ENCODE measurements at regions of chr1 and their contacts with region 1.

Region 1: DNA sequence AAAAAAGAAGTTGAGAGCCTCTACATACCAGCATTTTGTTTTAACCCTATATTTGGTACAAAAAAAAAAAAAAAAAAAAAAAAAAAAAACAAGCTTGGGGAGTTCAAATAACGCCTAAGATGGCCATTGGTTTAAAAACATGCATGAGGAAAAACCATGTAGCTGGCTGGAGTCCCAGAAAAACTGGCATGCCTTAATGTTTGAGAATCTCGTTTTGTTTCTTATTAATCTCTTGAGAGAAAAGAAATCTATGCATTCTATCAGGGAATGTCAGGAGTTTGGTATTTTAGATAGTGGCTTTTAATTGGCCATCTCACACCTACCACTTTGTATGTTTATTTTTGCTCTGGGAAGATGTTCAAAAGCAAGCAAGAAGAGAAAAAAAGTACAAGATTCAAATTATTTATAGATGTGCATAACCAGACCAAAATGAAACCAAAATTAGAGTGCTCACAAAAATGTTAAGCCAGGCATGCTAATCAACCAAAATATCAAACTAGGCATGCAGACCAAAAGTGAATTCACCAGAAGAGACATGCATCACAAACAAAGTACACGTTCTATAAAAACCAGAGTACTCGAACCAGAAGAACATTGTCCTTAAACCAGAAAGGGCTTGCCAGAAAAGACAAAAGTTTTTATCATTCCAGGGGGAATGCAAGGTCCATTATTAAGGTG is 156.6 kb downstream of the AK5 start:
- DNase-seq: no peak
- H3K4me3 Mint-ChIP-seq: peak overlapping the region; percentile 70
- H3K27ac Mint-ChIP-seq: peak overlapping the region; percentile 81
- H3K4me1 Mint-ChIP-seq: peaks cover 28% of the 10 kb centered on the region
- H3K27me3 Mint-ChIP-seq: no peaks in the 10 kb centered on the region

Region 2: GRCh38 chr1:76933872-76934815 is 504.2 kb before region 1 on chr1:
- CTCF ChIA-PET with region 1: no interaction called
- intact Hi-C with region 1: no loop called
- DNase-seq: no peak
- H3K4me3 Mint-ChIP-seq: no peak overlapping the region
- H3K27ac Mint-ChIP-seq: no peak overlapping the region
- H3K4me1 Mint-ChIP-seq: no peaks in the 10 kb centered on the region
- H3K27me3 Mint-ChIP-seq: peaks cover 5% of the 10 kb centered on the region

Region 3: GRCh38 chr1:77170687-77171086 is 267.7 kb before region 1 on chr1:
- CTCF ChIA-PET with region 1: no interaction called
- intact Hi-C with region 1: loop called (anchors 5 kb)
- DNase-seq: no peak
- H3K4me3 Mint-ChIP-seq: no peak overlapping the region
- H3K27ac Mint-ChIP-seq: peak overlapping the region; percentile 62
- H3K4me1 Mint-ChIP-seq: peaks cover 23% of the 10 kb centered on the region
- H3K27me3 Mint-ChIP-seq: no peaks in the 10 kb centered on the region

Region 4: DNA sequence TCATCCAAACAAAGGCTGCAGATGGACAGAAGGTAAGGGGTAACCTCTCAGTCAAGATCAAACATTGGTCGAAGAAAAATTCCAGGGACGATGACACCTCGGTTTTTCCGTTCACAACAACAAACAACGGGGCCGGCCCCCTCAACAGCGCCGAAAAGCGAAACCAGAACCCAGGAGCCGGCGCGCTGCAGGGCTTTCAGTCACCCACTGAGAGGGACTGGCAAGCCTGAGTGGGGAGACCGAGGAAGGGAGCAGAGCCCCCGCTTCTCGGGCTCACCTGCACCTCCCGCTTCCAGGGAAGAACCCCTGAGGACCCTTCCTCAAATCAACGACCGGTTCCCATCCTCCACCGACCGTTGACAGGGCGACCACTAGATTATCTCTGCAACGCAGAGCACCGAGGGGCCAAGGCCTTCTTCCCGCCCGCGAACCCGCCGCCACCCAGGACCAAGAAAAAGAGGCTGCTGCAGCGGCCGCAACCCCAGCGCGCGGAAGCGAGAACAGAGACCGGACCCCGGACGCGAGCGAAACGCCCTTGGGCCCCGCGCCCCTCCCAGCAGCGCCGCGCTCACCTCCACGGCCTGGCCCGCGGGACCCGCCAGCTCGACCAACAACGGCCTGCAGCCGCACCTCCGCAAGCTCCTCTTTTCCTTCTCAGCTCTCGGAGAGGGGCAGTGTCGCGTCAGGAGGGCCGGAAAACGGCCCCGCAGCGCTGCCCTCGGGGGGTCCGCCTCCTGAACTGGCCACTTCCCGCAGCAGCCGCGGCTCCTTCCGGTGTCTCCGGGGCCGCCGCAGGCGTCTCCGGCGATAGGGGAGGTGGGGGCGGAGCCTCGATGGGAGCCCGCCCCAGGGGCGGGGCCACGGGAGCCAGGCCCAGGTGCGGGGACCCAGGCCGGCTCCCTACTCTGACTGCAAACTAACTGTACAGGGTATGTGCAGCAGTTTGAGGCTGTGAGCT is 321.0 kb after region 1 on chr1 and contains the start of gene USP33:
- CTCF ChIA-PET with region 1: no interaction called
- intact Hi-C with region 1: loop called (anchors 5 kb)
- DNase-seq: peak; percentile 93
- H3K4me3 Mint-ChIP-seq: peak within 1 kb of the TSS; percentile 90
- H3K27ac Mint-ChIP-seq: peak within 1 kb of the TSS; percentile 93
- H3K4me1 Mint-ChIP-seq: peaks cover 46% of the 10 kb centered on the region
- H3K27me3 Mint-ChIP-seq: no peaks in the 10 kb centered on the region
- total RNA-seq, gene USP33: 32.6 to 35.6 TPM

Measured in activated naive CD4-positive, alpha-beta T cell treated with anti-CD3 and anti-CD28 coated beads for 36 hours (primary cell).